ENCODE measurements at regions of chr20 and their contacts with region 1.

Region 1: GRCh38 chr20:45436732-45437391 is 20.9 kb downstream of the PIGT start:
- DNase-seq: peak; percentile 84
- ATAC-seq: peak; percentile 91
- H3K4me3 Mint-ChIP-seq: peak overlapping the region; percentile 86
- H3K27ac Mint-ChIP-seq: peak overlapping the region; percentile 68
- H3K4me1 Mint-ChIP-seq: peaks cover 39% of the 10 kb centered on the region
- H3K27me3 Mint-ChIP-seq: no peaks in the 10 kb centered on the region
- CTCF ChIP-seq: peak; percentile 60

Region 2: DNA sequence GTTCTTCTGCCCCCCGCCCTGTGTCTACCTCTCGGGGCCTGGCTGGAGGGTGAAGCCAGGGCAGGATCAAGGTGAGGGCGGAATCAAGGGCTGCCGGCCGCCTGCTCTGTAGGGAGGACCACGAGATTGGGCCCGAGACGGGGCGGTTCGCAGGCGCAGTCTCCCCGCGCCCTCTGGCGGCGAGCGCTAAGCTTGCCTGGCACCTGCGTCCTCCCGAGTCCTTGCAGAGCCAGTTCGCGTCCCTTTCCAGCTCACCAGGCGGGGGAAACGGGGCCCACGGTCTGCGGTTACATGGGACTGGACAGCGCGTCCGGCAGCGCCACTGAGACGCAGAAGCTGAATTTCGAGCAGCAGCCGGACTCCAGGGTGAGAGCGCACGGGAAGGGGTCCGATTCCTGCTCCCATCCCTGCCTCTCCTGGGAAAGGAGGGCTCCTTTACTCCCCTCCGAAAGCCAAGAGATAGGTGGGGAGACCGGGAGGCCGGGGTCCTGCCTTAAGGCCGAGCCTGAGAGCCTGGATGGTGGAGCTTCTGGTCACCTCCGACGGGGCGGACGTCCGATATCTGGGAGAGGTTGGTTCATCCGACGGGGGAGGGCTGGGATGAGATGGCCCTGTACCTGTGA is 125.2 kb before region 1 on chr20:
- CTCF ChIA-PET with region 1: interaction called, 10 read pairs
- POLR2A ChIA-PET with region 1: no interaction called
- intact Hi-C with region 1: no loop called
- DNase-seq: peak; percentile 58
- ATAC-seq: peak; percentile 89
- H3K4me3 Mint-ChIP-seq: no peak overlapping the region
- H3K27ac Mint-ChIP-seq: no peak overlapping the region
- H3K4me1 Mint-ChIP-seq: peaks cover 7% of the 10 kb centered on the region
- H3K27me3 Mint-ChIP-seq: peaks cover 55% of the 10 kb centered on the region
- CTCF ChIP-seq: peak; percentile 76

Region 3: DNA sequence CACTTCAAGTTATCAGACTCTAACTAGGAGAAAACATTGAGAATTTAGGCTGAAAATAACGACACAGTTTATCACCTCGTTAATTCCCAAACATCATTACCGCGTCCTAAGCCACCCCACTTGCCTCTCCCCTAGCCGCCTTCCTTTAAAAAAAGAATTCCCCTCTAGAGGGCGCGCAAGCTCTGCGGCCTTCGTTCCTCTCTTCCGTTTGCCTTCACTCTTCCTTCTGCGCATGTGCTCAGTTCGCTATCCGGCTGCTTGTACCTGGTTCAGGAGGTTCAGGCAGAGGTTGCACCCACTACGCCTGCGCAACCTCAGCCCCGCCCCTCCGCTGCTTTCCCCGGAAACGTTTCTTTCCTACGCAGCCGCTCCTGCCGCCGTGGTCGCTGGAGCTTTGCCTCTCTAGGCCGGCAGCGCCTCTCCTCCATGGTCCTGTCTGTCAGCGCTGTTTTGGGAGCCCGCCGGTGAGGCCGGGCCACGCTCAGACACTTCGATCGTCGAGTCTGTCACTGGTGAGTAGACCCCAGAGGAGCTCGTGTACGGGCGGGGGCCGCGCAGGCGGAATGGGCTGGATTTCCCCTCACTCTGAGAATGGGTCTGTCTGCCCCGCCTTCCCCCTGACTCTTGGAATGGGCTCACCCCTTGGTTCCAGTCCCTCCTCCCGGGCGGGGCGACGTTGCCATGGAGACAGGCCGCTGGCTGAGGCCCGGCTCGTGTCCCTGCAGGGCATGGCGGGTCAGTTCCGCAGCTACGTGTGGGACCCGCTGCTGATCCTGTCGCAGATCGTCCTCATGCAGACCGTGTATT is 73.9 kb before region 1 on chr20 and contains the start of gene SYS1:
- CTCF ChIA-PET with region 1: interaction called, 534 read pairs
- POLR2A ChIA-PET with region 1: interaction called, 74 read pairs
- intact Hi-C with region 1: loop called (anchors 1 kb)
- DNase-seq: peak; percentile 94
- ATAC-seq: peak; percentile 84
- H3K4me3 Mint-ChIP-seq: peak within 1 kb of the TSS; percentile 100
- H3K27ac Mint-ChIP-seq: peak within 1 kb of the TSS; percentile 99
- H3K4me1 Mint-ChIP-seq: peaks cover 53% of the 10 kb centered on the region
- H3K27me3 Mint-ChIP-seq: no peaks in the 10 kb centered on the region
- CTCF ChIP-seq: peak; percentile 69
- total RNA-seq, gene SYS1: 31.7 and 35.2 TPM in 2 replicates

Region 4: DNA sequence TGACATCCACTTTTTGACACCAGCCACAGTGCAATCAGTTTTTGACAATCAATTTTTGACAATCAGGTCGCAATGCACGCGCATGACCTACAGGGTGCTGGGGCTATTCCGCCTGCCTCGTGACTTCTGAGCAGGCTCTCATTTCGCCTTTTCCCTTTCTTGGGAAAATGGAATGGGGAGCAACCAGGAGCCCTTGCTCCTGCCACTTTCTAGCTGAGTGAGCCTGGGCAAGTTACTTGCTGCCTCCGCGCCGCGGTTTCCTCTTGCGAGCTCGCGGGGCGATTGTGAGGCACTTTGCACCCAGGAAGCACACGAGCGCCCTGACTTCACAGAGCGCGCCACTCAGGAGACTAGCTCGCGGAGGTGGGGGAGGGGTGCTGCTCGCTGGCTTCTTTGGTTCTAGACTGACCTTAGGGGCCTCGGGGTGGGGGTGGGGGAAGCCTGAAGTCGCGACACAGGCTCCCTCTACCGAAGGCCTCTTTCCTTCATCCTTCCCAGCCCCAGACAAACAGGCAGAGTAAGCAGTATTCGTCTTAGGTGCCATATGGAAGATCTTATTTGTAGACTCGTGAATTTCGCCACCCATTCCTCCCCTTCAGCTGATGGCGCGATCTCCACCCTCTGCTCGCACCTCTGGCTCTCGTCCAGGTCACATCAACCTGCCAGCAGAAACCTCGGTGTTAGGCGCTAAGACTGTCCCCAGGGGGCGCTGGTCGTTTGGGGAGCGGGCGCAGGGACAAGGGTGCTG is 63.3 kb before region 1 on chr20:
- CTCF ChIA-PET with region 1: interaction called, 534 read pairs
- POLR2A ChIA-PET with region 1: interaction called, 29 read pairs
- intact Hi-C with region 1: loop called (anchors 1 kb)
- DNase-seq: peak; percentile 76
- ATAC-seq: peak; percentile 94
- H3K4me3 Mint-ChIP-seq: peak overlapping the region; percentile 86
- H3K27ac Mint-ChIP-seq: peak overlapping the region; percentile 76
- H3K4me1 Mint-ChIP-seq: peaks cover 56% of the 10 kb centered on the region
- H3K27me3 Mint-ChIP-seq: no peaks in the 10 kb centered on the region
- CTCF ChIP-seq: no peak

Region 5: DNA sequence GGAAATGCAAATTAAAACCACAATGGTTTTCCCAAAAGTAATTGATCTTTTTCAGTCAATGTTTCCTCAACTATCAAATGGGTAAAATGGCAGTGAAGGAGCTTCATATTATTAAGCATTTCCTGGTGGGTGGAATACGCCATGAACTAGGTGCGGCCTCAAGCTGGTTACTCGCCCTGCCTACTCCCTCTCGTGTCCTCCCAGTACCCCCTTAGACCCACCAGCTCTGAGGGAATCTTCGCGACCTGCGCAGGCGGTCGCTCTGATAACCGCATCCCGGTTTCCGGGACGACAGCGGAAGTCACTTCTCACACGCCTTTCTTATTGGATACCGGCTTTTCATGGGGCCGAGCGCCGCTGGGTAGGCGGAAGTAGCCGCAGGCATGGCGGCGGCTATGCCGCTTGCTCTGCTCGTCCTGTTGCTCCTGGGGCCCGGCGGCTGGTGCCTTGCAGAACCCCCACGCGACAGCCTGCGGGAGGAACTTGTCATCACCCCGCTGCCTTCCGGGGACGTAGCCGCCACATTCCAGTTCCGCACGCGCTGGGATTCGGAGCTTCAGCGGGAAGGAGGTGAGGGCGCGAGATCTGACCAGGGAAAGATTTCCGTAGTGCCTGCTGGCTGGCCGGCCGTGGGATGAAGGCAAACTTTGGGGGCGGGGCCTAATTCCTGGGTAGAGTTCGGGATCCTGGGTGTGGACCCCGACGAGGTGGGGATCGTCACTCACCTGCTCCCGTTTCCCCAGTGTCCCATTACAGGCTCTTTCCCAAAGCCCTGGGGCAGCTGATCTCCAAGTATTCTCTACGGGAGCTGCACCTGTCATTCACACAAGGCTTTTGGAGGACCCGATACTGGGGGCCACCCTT is 20.9 kb before region 1 on chr20 and contains the start of gene PIGT:
- CTCF ChIA-PET with region 1: interaction called, 39 read pairs
- POLR2A ChIA-PET with region 1: interaction called, 6 read pairs
- intact Hi-C with region 1: loop called (anchors 1 kb)
- DNase-seq: peak; percentile 75
- ATAC-seq: peak; percentile 86
- H3K4me3 Mint-ChIP-seq: peak within 1 kb of the TSS; percentile 96
- H3K27ac Mint-ChIP-seq: peak within 1 kb of the TSS; percentile 98
- H3K4me1 Mint-ChIP-seq: peaks cover 58% of the 10 kb centered on the region
- H3K27me3 Mint-ChIP-seq: no peaks in the 10 kb centered on the region
- CTCF ChIP-seq: no peak
- total RNA-seq, gene PIGT: 65.8 and 74.5 TPM in 2 replicates